ENCODE measurements at regions of chr1 and their contacts with region 1.

Region 1: GRCh38 chr1:19704247-19705113 is 39.8 kb downstream of the HTR6 start:
- DNase-seq: peak in 1 of 2 experiments; percentile 68
- H3K4me3 ChIP-seq: no peak overlapping the region
- H3K27ac ChIP-seq: no peak overlapping the region
- H3K4me1 ChIP-seq: no peaks in the 10 kb centered on the region
- H3K27me3 ChIP-seq: no peaks in the 10 kb centered on the region
- CTCF ChIP-seq: peak; percentile 89

Region 2: DNA sequence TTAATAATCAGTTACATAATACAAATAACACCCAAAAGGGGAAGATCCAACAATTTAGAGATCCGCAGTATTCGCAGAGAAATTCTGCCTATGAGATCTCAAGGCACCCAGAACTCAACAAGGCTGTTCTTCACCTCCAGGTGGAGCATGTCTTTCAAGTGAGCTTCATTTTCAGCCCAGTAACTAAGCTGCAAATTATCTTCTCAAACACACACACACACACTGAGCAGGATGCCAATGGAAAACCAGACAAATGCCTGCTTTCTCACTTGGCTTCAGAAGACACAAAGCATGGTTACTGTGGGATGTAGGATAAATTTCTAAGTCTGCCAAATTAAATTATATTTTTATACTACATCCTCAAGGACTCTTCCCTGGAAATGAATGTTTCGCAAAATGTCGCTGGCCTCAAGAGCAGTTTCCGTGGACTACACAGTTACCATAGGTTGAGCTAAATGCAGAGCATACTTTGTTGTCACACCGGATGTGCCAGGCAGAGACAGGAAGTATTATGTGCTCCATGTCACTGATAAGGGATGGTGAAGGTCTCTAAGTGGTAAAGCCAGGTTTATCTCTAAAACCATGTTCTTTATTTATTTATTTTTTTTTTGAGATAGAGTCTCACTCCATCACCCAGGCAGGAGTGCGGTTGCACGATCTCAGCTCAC is 524.7 kb before region 1 on chr1:
- CTCF ChIA-PET with region 1: no interaction called
- POLR2A ChIA-PET with region 1: no interaction called
- intact Hi-C with region 1: no loop called
- DNase-seq: no peak
- H3K4me3 ChIP-seq: no peak overlapping the region
- H3K27ac ChIP-seq: no peak overlapping the region
- H3K4me1 ChIP-seq: no peaks in the 10 kb centered on the region
- H3K27me3 ChIP-seq: no peaks in the 10 kb centered on the region
- CTCF ChIP-seq: no peak; the same call in 1 of the 2 replicates

Region 3: GRCh38 chr1:19596714-19597495 is 107.6 kb before region 1 on chr1:
- CTCF ChIA-PET with region 1: no interaction called
- POLR2A ChIA-PET with region 1: no interaction called
- intact Hi-C with region 1: no loop called
- DNase-seq: peak; percentile 92 to 94
- H3K4me3 ChIP-seq: peak overlapping the region; percentile 74
- H3K27ac ChIP-seq: peak overlapping the region; percentile 84
- H3K4me1 ChIP-seq: peaks cover 18% of the 10 kb centered on the region; the same call in 1 of the 2 replicates
- H3K27me3 ChIP-seq: no peaks in the 10 kb centered on the region
- CTCF ChIP-seq: no peak

Region 4: DNA sequence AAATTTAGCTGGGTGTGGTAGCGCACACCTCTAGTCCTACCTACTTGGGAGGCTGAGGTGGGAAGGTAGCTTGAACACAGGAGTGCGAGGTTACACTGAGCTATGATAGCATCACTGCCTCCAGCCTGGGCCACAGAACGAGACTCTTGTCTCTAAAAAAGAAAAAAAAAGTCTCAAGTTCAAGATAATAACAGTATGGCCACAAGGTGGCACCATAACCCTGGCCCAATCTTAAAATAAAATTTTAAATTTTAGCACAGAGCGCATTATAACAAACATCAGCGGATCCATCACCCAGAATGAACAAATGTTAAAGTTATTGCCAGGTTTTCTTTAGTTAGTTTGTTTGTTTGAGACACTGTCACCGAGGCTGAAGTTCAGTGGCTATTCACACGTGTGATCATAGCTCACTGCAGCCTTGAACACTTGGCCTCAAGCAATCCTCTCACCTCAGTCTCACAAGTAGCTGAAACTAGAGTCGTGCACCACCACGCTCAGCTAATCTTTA is 42.7 kb before region 1 on chr1:
- CTCF ChIA-PET with region 1: interaction called, 7 read pairs
- POLR2A ChIA-PET with region 1: no interaction called
- intact Hi-C with region 1: loop called (anchors 2 kb)
- DNase-seq: peak in 1 of 2 experiments; percentile 28
- H3K4me3 ChIP-seq: no peak overlapping the region
- H3K27ac ChIP-seq: no peak overlapping the region
- H3K4me1 ChIP-seq: no peaks in the 10 kb centered on the region
- H3K27me3 ChIP-seq: no peaks in the 10 kb centered on the region
- CTCF ChIP-seq: peak; percentile 72

Region 5: GRCh38 chr1:19892628-19893168 is 188.2 kb after region 1 on chr1:
- CTCF ChIA-PET with region 1: no interaction called
- POLR2A ChIA-PET with region 1: interaction called, 51 read pairs
- intact Hi-C with region 1: no loop called
- DNase-seq: no peak
- H3K4me3 ChIP-seq: no peak overlapping the region
- H3K27ac ChIP-seq: no peak overlapping the region
- H3K4me1 ChIP-seq: peaks cover 4% of the 10 kb centered on the region; the same call in 1 of the 2 replicates
- H3K27me3 ChIP-seq: no peaks in the 10 kb centered on the region
- CTCF ChIP-seq: no peak